Posterior cingulate gyrus (tissue), 11 donors: ENCODE measurements at regions of chr19 and their contacts with region 1.

Region 1: DNA sequence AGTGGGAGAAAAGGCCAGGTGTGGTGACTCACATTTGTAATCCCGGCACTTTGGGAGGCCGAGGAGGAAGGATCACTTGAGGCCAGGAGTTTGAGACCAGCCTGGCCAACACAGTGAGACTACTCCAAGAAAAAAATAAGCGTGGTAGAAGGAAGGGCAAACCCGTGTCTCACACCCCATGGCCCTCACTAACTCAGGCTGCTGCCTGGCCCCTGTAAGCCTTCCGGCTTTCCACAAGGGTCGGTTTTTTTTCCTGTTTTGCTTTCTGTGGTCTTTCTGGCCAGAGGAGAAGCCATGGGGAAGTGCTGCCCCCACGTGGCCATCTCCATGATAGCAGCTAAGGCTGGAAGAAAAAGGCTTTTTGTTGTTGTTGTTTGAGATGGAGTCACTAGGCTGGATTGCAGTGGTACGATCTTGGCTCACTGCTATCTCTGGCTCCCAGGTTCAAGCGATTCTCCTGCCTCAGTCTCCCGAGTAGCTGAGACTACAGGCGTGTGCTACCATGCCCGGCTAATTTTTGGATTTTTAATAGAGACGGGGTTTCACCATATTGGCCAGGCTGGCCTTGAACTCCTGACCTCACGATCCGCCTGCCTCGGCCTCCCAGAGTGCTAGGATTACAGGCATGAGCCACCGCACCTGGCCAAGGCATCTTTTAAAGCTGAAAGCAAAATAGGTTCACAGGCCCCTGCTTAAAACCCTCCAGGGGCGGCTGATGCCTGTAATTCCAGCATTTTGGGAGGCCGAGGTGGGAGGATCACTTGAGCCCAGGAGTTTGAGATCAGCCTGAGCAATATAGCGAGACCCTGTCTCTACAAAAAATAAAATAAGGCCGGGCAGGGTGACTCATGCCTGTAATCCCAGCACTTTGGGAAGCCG is 7.5 kb upstream of the ARHGEF18 start:
- DNase-seq: peak; percentile 53 to 97 (median 90)

Region 2: DNA sequence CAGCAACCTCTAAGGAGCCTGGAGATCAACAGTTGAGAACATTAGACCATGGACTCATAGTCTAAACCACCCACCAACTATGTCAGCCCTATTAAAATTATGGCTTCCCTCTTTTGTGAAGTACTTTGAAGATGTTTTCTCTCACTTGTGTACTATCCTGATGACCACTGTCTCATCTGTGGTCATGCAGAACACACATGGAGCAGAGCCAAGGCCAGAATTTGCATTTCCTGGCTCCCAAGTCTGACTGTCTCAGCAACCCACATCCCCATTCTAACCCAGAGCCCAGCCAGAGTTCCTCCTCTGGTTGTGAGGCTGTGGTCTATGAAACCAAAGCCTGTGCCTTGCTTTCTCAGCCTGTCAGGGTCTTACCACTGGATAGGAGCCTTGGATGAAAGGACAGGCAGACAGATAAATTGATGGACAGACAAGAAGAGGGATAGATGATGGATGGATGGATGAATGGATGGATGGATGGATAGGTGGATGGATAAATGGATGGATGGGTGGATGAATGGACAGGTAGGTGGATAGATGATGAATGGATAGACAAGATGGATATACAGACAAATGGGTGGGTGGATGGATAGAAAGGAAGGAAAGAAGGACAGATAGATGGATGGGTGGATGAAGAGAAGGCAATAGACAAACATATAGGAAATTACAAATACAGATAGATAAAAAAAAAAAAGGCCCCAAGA is 236.3 kb before region 1 on chr19:
- intact Hi-C with region 1: loop called (anchors 1 kb)
- DNase-seq: peak in 1 of 10 donors; percentile 11

Region 3: GRCh38 chr19:7149956-7150705 is 191.1 kb before region 1 on chr19:
- intact Hi-C with region 1: loop called (anchors 1 kb)
- DNase-seq: no peak